Stomach (tissue), 19 donors: ENCODE measurements at regions of chrX and their contacts with region 1.

Region 1: GRCh38 chrX:109485470-109486340 is 3.8 kb upstream of the GUCY2F start:
- DNase-seq: peak; percentile 72 to 86
- H3K4me3 ChIP-seq: no peak overlapping the region
- H3K27ac ChIP-seq: no peak overlapping the region
- H3K4me1 ChIP-seq: no peaks in the 10 kb centered on the region
- H3K27me3 ChIP-seq: no peaks in the 10 kb centered on the region
- CTCF ChIP-seq: peak in 5 of 7 experiments; percentile 71 to 96 (median 92)
- EP300 ChIP-seq: no peak
- POLR2A ChIP-seq: no peak

Region 2: GRCh38 chrX:109347632-109348031 is 138.1 kb before region 1 on chrX:
- intact Hi-C with region 1: no loop called
- DNase-seq: peak in 1 of 2 donors; percentile 26
- H3K4me3 ChIP-seq: no peak overlapping the region
- H3K27ac ChIP-seq: no peak overlapping the region
- H3K4me1 ChIP-seq: peaks cover 0 to 12% (median 0%) of the 10 kb centered on the region in 4 donors
- H3K27me3 ChIP-seq: peaks cover 0 to 3% (median 0%) of the 10 kb centered on the region in 3 donors
- CTCF ChIP-seq: no peak
- EP300 ChIP-seq: no peak
- POLR2A ChIP-seq: no peak

Region 3: GRCh38 chrX:109624641-109625616 is 139.2 kb after region 1 on chrX and contains the start of gene KCNE5:
- intact Hi-C with region 1: loop called (anchors 10 kb)
- DNase-seq: peak in 1 of 2 donors; percentile 75
- H3K4me3 ChIP-seq: peak within 1 kb of the TSS; percentile 31 to 39 (median 34)
- H3K27ac ChIP-seq: no peak within 1 kb of the TSS
- H3K4me1 ChIP-seq: peaks cover 0 to 9% (median 4%) of the 10 kb centered on the region in 4 donors
- H3K27me3 ChIP-seq: peaks cover 0 to 9% (median 0%) of the 10 kb centered on the region in 3 donors
- CTCF ChIP-seq: no peak
- EP300 ChIP-seq: no peak
- POLR2A ChIP-seq: no peak
- total RNA-seq, gene KCNE5: 0.37 TPM in 1 of 5 donors, not detected in the others

Region 4: DNA sequence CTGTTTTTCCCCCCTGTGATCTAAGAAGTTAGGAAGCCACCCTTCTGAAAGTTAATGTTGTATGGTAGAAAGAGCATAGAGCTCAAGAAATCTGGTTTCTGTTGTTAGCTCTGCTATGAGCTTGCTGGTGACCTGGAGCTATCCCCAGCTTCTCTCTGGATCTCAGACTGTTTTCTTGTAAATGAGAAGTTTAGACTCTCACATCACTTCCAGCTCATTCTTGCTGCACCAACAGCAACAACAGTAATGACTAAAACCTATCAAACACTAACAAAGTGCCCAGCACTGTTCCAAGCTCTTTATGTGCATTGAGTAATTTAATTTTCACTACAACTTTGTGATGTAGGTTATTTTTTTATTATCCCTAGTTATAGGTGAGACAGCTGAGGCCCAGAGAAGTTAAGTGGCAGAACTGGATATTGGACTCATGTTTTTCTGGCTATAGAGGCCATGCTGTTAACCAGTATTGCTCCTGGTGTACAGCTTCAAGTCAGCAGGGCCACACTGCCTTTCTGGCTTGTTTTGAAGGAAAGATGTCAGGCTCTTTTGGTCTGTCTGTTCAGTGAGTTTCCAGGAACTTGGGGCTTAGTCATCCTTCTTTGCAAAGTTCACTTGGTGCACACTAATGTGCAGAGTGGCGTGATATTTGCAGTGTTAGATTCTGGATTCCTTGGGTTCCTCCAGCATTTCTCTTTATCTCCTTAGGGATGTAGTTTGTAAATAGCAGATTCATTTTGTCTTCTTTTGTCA is 489.4 kb after region 1 on chrX:
- intact Hi-C with region 1: no loop called
- DNase-seq: no peak
- H3K4me3 ChIP-seq: no peak overlapping the region
- H3K27ac ChIP-seq: no peak overlapping the region
- H3K4me1 ChIP-seq: no peaks in the 10 kb centered on the region
- H3K27me3 ChIP-seq: peaks cover 0 to 17% (median 0%) of the 10 kb centered on the region in 3 donors
- CTCF ChIP-seq: no peak
- EP300 ChIP-seq: no peak
- POLR2A ChIP-seq: no peak